ENCODE measurements at regions of chr9 and their contacts with region 1.

Region 1: DNA sequence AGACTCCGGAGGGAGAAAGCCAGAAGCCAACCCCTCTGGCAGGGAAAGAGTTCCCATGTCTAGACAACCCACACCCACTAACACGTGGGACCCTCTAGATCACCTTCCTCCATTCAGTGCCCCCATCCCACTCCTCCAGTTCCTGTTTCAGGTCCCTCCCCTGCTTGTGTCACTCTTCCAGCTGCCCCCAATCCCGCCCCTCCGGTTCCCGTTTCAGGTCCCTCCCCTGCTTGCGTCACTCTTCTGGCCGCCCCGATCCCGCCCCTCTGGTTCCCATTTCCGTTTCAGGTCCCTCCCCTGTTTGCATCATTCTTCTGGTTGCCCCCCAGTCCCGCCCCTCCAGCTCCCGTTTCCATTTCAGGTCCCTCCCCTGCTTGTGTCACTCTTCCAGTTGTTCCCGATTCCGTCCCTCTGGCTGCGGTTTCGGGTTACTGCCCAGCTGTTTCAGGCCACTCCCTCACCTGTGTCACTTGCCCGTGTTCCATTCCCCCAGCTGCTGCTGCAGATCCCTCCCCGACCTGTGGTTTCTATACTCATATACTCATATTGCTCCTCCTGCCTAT is 64.8 kb upstream of the RANBP6 start:
- DNase-seq: peak; percentile 43 to 59 (median 49)
- H3K4me3 ChIP-seq: peak overlapping the region; percentile 42 to 67
- H3K4me3 Mint-ChIP-seq: peak overlapping the region; percentile 89 to 95 (median 92)
- H3K27ac ChIP-seq: peak overlapping the region; percentile 33
- H3K27ac Mint-ChIP-seq: peak overlapping the region; percentile 5 to 96 (median 95)
- H3K4me1 ChIP-seq: no peaks in the 10 kb centered on the region
- H3K4me1 Mint-ChIP-seq: peaks cover 0 to 11% (median 3%) of the 10 kb centered on the region in 4 donors
- H3K27me3 ChIP-seq: no peaks in the 10 kb centered on the region
- H3K27me3 Mint-ChIP-seq: peaks cover 4 to 10% of the 10 kb centered on the region in 2 donors

Region 2: DNA sequence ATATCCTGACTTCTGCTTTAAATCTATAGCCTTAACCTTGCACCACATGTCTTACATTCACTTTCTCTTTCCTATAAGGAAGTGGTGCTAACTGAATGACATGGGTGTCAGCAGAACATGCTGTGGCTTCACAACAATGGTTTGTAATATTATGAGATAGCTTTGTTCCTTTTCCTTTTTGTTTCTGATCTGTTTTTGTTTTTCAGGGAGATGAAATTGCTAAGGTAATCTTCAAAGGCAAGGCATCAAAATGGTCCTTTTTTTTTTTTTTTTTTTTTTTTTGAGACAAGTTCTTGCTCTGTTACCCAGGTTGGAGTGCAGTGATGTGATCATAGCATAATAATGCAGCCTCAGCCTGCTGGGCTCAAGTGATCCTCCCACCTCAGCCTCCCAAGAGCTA is 11.3 kb before region 1 on chr9:
- CTCF ChIA-PET with region 1: no interaction called
- POLR2A ChIA-PET with region 1: interaction called, 11 read pairs
- intact Hi-C with region 1: no loop called
- DNase-seq: peak; percentile 55 to 76 (median 68)
- H3K4me3 ChIP-seq: peak overlapping the region in 1 of 2 donors; percentile 15
- H3K4me3 Mint-ChIP-seq: peak overlapping the region in 7 of 8 donors; percentile 33 to 79 (median 72)
- H3K27ac ChIP-seq: peak overlapping the region; percentile 1
- H3K27ac Mint-ChIP-seq: peak overlapping the region; percentile 50 to 98 (median 91)
- H3K4me1 ChIP-seq: peaks cover 17% of the 10 kb centered on the region
- H3K4me1 Mint-ChIP-seq: peaks cover 10 to 34% (median 16%) of the 10 kb centered on the region in 4 donors
- H3K27me3 ChIP-seq: no peaks in the 10 kb centered on the region
- H3K27me3 Mint-ChIP-seq: no peaks in the 10 kb centered on the region

Region 3: GRCh38 chr9:6243746-6244145 is 163.5 kb after region 1 on chr9:
- CTCF ChIA-PET with region 1: no interaction called
- POLR2A ChIA-PET with region 1: no interaction called
- intact Hi-C with region 1: no loop called
- DNase-seq: no peak
- H3K4me3 ChIP-seq: no peak overlapping the region
- H3K4me3 Mint-ChIP-seq: no peak overlapping the region
- H3K27ac ChIP-seq: no peak overlapping the region
- H3K27ac Mint-ChIP-seq: no peak overlapping the region
- H3K4me1 ChIP-seq: no peaks in the 10 kb centered on the region
- H3K4me1 Mint-ChIP-seq: peaks cover 0 to 3% (median under 1%) of the 10 kb centered on the region in 4 donors
- H3K27me3 ChIP-seq: no peaks in the 10 kb centered on the region
- H3K27me3 Mint-ChIP-seq: peaks cover 9 to 16% of the 10 kb centered on the region in 2 donors